ENCODE measurements at regions of chr15 and their contacts with region 1.

Region 1: DNA sequence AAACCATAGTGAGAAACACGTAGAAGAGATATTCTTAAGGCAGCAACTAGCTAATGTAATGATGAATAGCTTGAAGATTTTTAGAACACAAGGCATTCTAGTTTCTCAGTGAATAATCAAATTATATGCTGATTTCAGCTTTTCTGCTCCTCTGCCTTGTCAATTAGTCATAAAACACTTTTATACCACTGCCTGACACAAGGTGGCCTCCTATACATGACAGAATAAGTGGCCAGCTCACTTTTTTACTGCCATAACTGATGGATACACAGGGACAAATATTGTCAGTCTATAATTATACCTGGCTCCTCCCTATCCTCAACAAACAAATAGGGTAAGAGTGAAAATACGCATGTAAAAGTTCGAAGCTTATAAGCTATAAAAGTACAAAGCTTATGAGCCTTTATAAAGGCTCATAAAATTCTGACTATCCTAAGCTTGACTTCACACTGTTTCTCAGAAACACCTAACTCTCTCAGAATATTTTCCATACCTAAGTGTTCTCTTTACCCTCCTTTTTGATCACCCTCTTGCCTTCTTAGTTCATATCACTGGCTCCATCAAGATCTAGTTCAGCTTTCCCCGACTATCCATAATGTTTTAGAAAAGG is 81.6 kb downstream of the HERC1 start:
- DNase-seq: no peak
- ATAC-seq: peak; percentile 82

Region 2: GRCh38 chr15:63891079-63891767 is 139.0 kb after region 1 on chr15:
- intact Hi-C with region 1: loop called (anchors 2 kb)
- DNase-seq: peak; percentile 88
- ATAC-seq: peak; percentile 80

Region 3: DNA sequence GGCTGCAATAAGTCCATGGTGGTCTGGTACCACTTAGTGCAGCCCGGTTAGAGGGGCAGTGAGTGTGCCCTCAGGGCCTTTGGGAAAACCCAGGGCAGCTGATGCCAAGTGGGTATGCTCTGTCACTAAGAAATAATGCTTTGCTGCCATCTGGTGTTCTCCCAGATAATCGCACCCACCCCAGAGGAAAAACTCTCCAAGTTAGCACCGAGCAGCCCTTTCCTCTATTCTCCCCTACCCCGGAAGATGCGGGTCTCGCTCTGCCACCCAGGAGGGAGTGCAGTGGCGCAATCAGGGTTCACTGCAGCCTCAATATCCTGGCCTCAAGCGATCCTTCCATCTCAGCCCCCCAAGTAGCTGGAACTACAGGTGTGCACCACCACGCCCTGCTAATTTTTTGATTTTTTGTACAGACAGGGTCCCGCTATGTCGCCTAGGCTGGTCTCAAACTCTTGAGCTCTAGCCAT is 315.4 kb after region 1 on chr15:
- intact Hi-C with region 1: loop called (anchors 5 kb)
- DNase-seq: no peak
- ATAC-seq: peak; percentile 74